ENCODE measurements at regions of chr3 and their contacts with region 1.

Region 1: GRCh38 chr3:101069901-101070798 is 76.9 kb upstream of the ABI3BP start:
- DNase-seq: peak; percentile 92
- ATAC-seq: peak; percentile 100
- H3K4me3 Mint-ChIP-seq: no peak overlapping the region
- H3K27ac Mint-ChIP-seq: no peak overlapping the region
- H3K4me1 Mint-ChIP-seq: peaks cover 9% of the 10 kb centered on the region
- H3K27me3 Mint-ChIP-seq: 0 out of 2 replicates have a peak, but pooled peaks cover 4% of the 10 kb centered on the region
- CTCF ChIP-seq: peak; percentile 76

Region 2: GRCh38 chr3:100825574-100825973 is 244.6 kb before region 1 on chr3:
- CTCF ChIA-PET with region 1: interaction called, 14 read pairs
- POLR2A ChIA-PET with region 1: no interaction called
- DNase-seq: no peak
- ATAC-seq: no peak
- H3K4me3 Mint-ChIP-seq: no peak overlapping the region
- H3K27ac Mint-ChIP-seq: no peak overlapping the region
- H3K4me1 Mint-ChIP-seq: no peaks in the 10 kb centered on the region
- H3K27me3 Mint-ChIP-seq: no peaks in the 10 kb centered on the region
- CTCF ChIP-seq: no peak

Region 3: DNA sequence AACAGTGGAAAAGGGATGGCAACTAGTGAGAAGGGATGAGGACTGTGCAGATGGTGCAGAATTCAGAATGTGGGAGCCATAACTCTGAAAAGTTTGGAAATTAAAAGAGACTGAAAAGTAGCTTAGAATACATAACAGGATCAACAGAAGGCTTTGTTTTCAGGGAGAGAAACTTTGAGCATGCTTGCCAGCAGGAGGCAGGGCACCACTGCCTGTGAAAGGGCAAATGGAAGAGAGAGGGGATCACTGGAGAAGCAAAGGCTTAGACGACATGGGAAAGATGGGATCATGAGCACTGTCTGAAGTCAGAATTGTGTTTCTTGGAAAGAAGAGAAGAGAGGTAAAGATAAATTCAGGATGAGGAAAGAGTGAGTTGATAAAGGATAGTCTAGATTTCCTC is 176.6 kb before region 1 on chr3:
- CTCF ChIA-PET with region 1: interaction called, 10 read pairs
- POLR2A ChIA-PET with region 1: no interaction called
- DNase-seq: peak; percentile 65
- ATAC-seq: peak; percentile 85
- H3K4me3 Mint-ChIP-seq: no peak overlapping the region
- H3K27ac Mint-ChIP-seq: no peak overlapping the region
- H3K4me1 Mint-ChIP-seq: peaks cover 7% of the 10 kb centered on the region
- H3K27me3 Mint-ChIP-seq: no peaks in the 10 kb centered on the region
- CTCF ChIP-seq: peak; percentile 43; the same call in 1 of the 2 replicates

Region 4: DNA sequence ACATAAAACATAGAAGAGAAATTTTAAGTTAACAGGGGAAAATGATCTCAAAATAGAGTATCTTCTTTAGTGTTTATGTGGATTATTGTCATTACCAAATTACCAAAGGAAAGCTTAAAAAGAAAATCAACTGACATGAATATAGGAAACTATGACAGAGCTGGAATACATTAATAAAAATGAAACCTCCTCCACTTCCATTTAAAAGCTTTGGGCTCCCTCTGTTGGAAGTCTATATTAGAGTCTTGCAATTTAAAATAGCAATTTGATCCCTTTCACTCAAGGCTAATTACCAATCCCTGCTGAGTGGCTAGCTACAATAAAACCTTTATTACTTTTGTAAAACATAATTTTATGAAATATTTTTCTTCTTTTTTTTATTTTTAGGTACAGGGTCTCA is 311.7 kb after region 1 on chr3:
- CTCF ChIA-PET with region 1: interaction called, 16 read pairs
- POLR2A ChIA-PET with region 1: no interaction called
- DNase-seq: no peak
- ATAC-seq: peak; percentile 13; the same call in 1 of the 2 replicates
- H3K4me3 Mint-ChIP-seq: no peak overlapping the region
- H3K27ac Mint-ChIP-seq: no peak overlapping the region
- H3K4me1 Mint-ChIP-seq: peaks cover 9% of the 10 kb centered on the region
- H3K27me3 Mint-ChIP-seq: no peaks in the 10 kb centered on the region
- CTCF ChIP-seq: 0 out of 2 replicates have a peak, but pooled peaks have one; percentile 17

Measured in WTC11 (cell line).